Calu3 (cell line): ENCODE measurements at regions of chr1 and their contacts with region 1.

Region 1: DNA sequence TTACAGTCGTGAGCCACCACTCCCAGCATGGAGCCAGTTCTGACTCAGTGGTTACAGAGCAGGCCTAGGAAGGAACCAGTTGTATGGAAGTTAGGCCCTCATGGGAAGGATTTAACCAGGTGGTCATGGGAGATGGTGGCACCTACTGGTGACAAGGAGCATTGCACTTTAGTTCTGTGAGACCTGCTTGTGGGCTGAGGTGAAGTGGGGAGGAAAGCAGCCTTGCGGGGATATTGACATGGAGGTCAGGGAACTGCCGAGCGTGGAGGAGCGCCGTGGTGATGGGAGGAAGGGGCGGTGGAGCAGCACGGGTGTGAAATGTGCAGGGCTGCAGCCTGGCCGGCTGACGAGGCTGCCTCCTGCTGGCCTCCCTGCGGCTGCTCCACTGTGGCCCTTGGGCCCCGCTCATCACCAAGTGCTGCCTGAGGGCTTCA is 100.4 kb downstream of the GALNT2 start:
- DNase-seq: peak; percentile 57
- H3K4me3 Mint-ChIP-seq: no peak overlapping the region
- H3K27ac Mint-ChIP-seq: peak overlapping the region; percentile 1
- H3K4me1 Mint-ChIP-seq: peaks cover 35% of the 10 kb centered on the region
- H3K27me3 Mint-ChIP-seq: no peaks in the 10 kb centered on the region
- CTCF ChIP-seq: peak; percentile 88

Region 2: DNA sequence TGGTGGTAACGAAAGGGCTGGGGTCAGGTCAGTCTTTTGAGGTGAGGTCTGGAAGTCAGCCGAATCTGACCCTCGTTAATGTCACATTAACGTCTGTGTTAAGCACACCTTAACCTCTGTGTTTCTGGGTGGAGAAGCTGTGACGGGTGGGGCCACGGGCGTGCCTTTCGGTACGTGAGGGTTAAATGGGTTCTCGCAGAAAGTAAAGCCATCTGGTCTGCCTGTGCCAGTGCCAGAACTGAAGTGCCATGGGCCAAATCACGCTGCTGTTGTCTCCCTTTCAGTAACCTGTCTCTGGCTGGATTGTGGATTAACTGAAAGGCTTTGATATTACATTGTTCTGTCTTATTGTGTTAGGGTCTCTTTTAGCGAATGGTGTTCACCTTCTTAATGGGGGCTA is 527.0 kb before region 1 on chr1:
- CTCF ChIA-PET with region 1: no interaction called
- intact Hi-C with region 1: no loop called
- DNase-seq: no peak
- H3K4me3 Mint-ChIP-seq: no peak overlapping the region
- H3K27ac Mint-ChIP-seq: no peak overlapping the region
- H3K4me1 Mint-ChIP-seq: no peaks in the 10 kb centered on the region
- H3K27me3 Mint-ChIP-seq: no peaks in the 10 kb centered on the region
- CTCF ChIP-seq: no peak

Region 3: DNA sequence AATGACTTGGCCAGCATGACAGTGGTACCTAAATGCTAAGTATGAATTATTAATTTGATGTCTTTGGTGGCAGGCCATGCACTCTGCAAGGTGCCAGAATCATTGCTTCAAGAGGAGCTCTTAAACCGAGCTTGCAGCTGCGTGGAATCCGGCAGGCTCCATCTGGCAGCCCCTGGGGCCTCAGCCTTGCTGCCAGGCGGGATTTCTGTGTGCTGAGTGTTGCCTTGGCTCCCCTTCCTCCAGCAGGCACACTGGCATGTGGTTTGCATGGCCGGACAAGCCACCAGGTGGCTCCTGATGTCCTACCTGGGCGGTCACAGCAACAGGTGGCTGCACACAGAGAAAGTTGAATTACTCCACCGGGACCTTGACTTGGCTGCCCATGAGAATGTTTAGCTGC is 386.0 kb before region 1 on chr1:
- CTCF ChIA-PET with region 1: no interaction called
- intact Hi-C with region 1: loop called (anchors 5 kb)
- DNase-seq: peak; percentile 68
- H3K4me3 Mint-ChIP-seq: no peak overlapping the region
- H3K27ac Mint-ChIP-seq: no peak overlapping the region
- H3K4me1 Mint-ChIP-seq: no peaks in the 10 kb centered on the region
- H3K27me3 Mint-ChIP-seq: peaks cover 69% of the 10 kb centered on the region
- CTCF ChIP-seq: peak; percentile 27

Region 4: GRCh38 chr1:229848752-229849677 is 318.4 kb before region 1 on chr1:
- CTCF ChIA-PET with region 1: no interaction called
- intact Hi-C with region 1: loop called (anchors 5 kb)
- DNase-seq: peak; percentile 48
- H3K4me3 Mint-ChIP-seq: no peak overlapping the region
- H3K27ac Mint-ChIP-seq: no peak overlapping the region
- H3K4me1 Mint-ChIP-seq: peaks cover 7% of the 10 kb centered on the region
- H3K27me3 Mint-ChIP-seq: peaks cover 49% of the 10 kb centered on the region
- CTCF ChIP-seq: peak; percentile 75

Region 5: GRCh38 chr1:230016159-230016558 is 151.3 kb before region 1 on chr1:
- CTCF ChIA-PET with region 1: no interaction called
- intact Hi-C with region 1: no loop called
- DNase-seq: no peak
- H3K4me3 Mint-ChIP-seq: no peak overlapping the region
- H3K27ac Mint-ChIP-seq: no peak overlapping the region
- H3K4me1 Mint-ChIP-seq: no peaks in the 10 kb centered on the region
- H3K27me3 Mint-ChIP-seq: peaks cover 11% of the 10 kb centered on the region
- CTCF ChIP-seq: no peak

Region 6: DNA sequence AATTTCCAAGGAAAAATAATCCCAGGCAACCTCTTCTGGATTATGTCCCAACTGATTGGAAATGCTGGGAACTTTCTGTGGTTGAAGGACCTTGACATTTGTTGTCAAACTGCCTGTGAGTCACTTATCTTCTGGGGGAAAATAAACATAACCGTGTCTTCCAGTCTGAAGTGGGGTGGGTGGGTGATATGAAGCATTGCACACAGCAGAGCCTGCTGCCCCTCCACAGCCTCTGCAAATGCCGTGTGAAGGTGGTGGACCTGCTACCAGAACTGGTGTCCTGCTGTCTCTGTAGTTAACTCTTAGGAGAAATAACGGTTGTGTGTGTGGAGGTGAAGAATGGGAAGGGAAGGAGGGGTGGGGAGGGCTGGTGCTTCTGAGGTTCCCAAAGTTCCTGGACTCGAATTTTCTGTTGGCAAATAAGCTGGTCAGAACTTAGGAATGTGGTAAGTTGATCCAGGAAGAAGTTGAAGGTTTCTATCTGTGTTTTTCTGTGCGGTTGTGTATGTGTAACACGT is 77.2 kb before region 1 on chr1:
- CTCF ChIA-PET with region 1: interaction called, 17 read pairs
- intact Hi-C with region 1: no loop called
- DNase-seq: no peak
- H3K4me3 Mint-ChIP-seq: peak overlapping the region; percentile 1
- H3K27ac Mint-ChIP-seq: peak overlapping the region; percentile 7
- H3K4me1 Mint-ChIP-seq: peaks cover 79% of the 10 kb centered on the region
- H3K27me3 Mint-ChIP-seq: no peaks in the 10 kb centered on the region
- CTCF ChIP-seq: no peak

Region 7: GRCh38 chr1:230150615-230151014 is 16.8 kb before region 1 on chr1:
- CTCF ChIA-PET with region 1: no interaction called
- intact Hi-C with region 1: no loop called
- DNase-seq: no peak
- H3K4me3 Mint-ChIP-seq: no peak overlapping the region
- H3K27ac Mint-ChIP-seq: no peak overlapping the region
- H3K4me1 Mint-ChIP-seq: peaks cover 22% of the 10 kb centered on the region
- H3K27me3 Mint-ChIP-seq: no peaks in the 10 kb centered on the region
- CTCF ChIP-seq: no peak

Region 8: DNA sequence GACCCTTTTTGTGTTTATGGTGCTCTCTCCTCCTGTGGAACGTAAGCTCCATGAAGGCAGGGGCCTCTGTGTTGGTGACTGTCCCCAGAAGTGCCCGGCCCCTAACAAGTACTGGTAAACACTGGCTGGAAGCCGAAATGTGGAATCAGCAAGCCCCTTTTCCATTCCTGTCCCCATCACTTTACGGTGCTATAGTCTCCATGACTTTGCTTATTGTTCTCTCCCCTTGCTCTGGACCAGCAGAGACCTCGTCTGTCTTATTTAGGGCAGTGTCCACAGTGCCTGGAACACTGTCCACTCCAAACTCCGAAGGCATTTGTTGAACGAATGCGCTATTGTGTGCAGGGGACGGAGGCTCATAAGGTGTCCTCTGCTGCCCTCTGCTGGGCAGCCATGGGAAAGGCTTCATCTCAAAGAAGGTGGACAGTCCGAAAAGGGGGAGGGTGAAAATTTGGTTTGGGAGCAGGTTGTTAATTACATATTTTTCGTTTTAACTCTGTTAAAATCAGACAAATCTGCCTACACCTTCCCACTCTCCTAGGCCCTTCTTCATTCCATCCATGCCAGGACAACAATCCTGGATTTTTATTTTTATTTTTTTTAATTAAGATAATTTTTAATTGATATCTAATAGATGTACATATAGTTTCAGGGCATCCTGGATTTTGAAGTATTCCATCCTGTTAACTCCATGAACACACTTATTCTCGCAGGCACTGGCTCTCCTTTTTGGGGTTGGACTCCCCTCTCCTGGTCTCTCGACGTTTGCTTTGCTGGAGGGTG is 143.1 kb after region 1 on chr1:
- CTCF ChIA-PET with region 1: interaction called, 7 read pairs
- intact Hi-C with region 1: loop called (anchors 5 kb)
- DNase-seq: peak; percentile 82
- H3K4me3 Mint-ChIP-seq: no peak overlapping the region
- H3K27ac Mint-ChIP-seq: peak overlapping the region; percentile 7
- H3K4me1 Mint-ChIP-seq: peaks cover 36% of the 10 kb centered on the region
- H3K27me3 Mint-ChIP-seq: no peaks in the 10 kb centered on the region
- CTCF ChIP-seq: peak; percentile 79